Panc1 (cell line): ENCODE measurements at regions of chr1 and their contacts with region 1.

Region 1: GRCh38 chr1:21659099-21659923 is 9.8 kb downstream of the RAP1GAP start:
- DNase-seq: no peak
- ATAC-seq: peak; percentile 45
- H3K4me3 ChIP-seq: peak overlapping the region; percentile 18 to 31; a peak in 2 of 4 replicates
- H3K27ac ChIP-seq: no peak overlapping the region
- H3K4me1 ChIP-seq: 0 out of 2 replicates have a peak, but pooled peaks cover 4% of the 10 kb centered on the region
- H3K27me3 ChIP-seq: peaks cover 2% of the 10 kb centered on the region; the same call in 1 of the 2 replicates
- CTCF ChIP-seq: peak; percentile 99

Region 2: DNA sequence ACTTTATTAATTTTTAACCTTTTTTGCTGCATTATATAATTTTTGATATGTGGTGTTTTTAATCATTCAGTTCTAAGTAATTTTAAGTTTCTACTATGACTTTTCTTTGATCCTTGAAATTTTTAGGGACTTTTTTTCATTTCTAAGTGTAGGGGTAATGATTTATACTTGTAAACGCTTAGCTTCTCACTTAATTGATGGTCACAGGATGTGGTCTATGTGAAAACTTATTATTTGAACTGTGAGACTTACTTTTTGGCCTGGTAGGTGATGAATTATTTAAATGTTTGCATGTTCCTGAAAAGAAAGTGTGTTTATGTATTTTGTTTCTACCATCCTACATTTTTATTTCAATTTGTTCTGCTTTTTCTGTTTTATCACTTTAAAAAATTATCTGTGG is 132.9 kb before region 1 on chr1:
- CTCF ChIA-PET with region 1: no interaction called
- POLR2A ChIA-PET with region 1: interaction called, 18 read pairs
- in situ Hi-C with region 1: no loop called
- intact Hi-C with region 1: loop called (anchors 10 kb)
- DNase-seq: no peak
- ATAC-seq: no peak
- H3K4me3 ChIP-seq: no peak overlapping the region
- H3K27ac ChIP-seq: no peak overlapping the region
- H3K4me1 ChIP-seq: no peaks in the 10 kb centered on the region
- H3K27me3 ChIP-seq: no peaks in the 10 kb centered on the region
- CTCF ChIP-seq: no peak

Region 3: GRCh38 chr1:21534674-21535378 is 124.5 kb before region 1 on chr1:
- CTCF ChIA-PET with region 1: interaction called, 3 read pairs
- POLR2A ChIA-PET with region 1: interaction called, 16 read pairs
- in situ Hi-C with region 1: no loop called
- intact Hi-C with region 1: loop called (anchors 10 kb)
- DNase-seq: peak; percentile 28
- ATAC-seq: peak; percentile 86
- H3K4me3 ChIP-seq: no peak overlapping the region
- H3K27ac ChIP-seq: no peak overlapping the region
- H3K4me1 ChIP-seq: no peaks in the 10 kb centered on the region
- H3K27me3 ChIP-seq: no peaks in the 10 kb centered on the region
- CTCF ChIP-seq: peak; percentile 85

Region 4: GRCh38 chr1:21539933-21540332 is 119.4 kb before region 1 on chr1:
- CTCF ChIA-PET with region 1: interaction called, 3 read pairs
- POLR2A ChIA-PET with region 1: interaction called, 16 read pairs
- in situ Hi-C with region 1: no loop called
- intact Hi-C with region 1: loop called (anchors 10 kb)
- DNase-seq: no peak
- ATAC-seq: peak; percentile 68; the same call in 1 of the 2 replicates
- H3K4me3 ChIP-seq: no peak overlapping the region
- H3K27ac ChIP-seq: no peak overlapping the region
- H3K4me1 ChIP-seq: no peaks in the 10 kb centered on the region
- H3K27me3 ChIP-seq: no peaks in the 10 kb centered on the region
- CTCF ChIP-seq: no peak; the same call in 1 of the 2 replicates

Region 5: GRCh38 chr1:21594935-21595897 is 64.1 kb before region 1 on chr1:
- CTCF ChIA-PET with region 1: no interaction called
- POLR2A ChIA-PET with region 1: no interaction called
- in situ Hi-C with region 1: no loop called
- intact Hi-C with region 1: loop called (anchors 10 kb)
- DNase-seq: no peak
- ATAC-seq: peak; percentile 68
- H3K4me3 ChIP-seq: no peak overlapping the region
- H3K27ac ChIP-seq: no peak overlapping the region
- H3K4me1 ChIP-seq: no peaks in the 10 kb centered on the region; the same call in 1 of the 2 replicates
- H3K27me3 ChIP-seq: no peaks in the 10 kb centered on the region
- CTCF ChIP-seq: peak; percentile 91